Left ventricle myocardium inferior (tissue), 1 donor: ENCODE measurements at regions of chr1 and their contacts with region 1.

Region 1: GRCh38 chr1:239426821-239427475 is 40.6 kb downstream of the CHRM3 start:
- DNase-seq: no peak
- H3K4me3 ChIP-seq: no peak overlapping the region
- H3K27ac ChIP-seq: no peak overlapping the region
- H3K4me1 ChIP-seq: no peaks in the 10 kb centered on the region
- H3K27me3 ChIP-seq: peaks cover 6% of the 10 kb centered on the region
- CTCF ChIP-seq: no peak

Region 2: DNA sequence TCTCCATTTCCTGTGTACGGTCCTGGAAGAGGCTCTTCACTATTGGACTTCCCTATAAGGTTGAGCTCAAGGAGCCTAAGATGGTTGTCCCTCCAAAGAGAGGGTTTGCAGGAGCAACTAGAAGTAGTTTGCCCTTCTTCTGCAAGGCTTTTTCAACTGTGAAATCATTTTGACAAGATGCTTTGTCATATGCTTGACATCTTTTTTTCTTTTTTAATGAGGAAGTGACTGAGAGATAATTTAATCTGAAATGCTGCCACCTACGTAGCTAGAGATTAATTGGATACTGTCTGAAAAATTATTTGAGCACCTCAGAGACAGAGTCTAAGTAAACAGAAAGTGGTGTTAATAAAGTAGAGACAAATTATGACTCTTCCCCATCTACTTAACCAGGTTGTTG is 56.4 kb after region 1 on chr1:
- intact Hi-C with region 1: loop called (anchors 10 kb)
- DNase-seq: no peak
- H3K4me3 ChIP-seq: no peak overlapping the region
- H3K27ac ChIP-seq: no peak overlapping the region
- H3K4me1 ChIP-seq: no peaks in the 10 kb centered on the region
- H3K27me3 ChIP-seq: no peaks in the 10 kb centered on the region
- CTCF ChIP-seq: no peak

Region 3: DNA sequence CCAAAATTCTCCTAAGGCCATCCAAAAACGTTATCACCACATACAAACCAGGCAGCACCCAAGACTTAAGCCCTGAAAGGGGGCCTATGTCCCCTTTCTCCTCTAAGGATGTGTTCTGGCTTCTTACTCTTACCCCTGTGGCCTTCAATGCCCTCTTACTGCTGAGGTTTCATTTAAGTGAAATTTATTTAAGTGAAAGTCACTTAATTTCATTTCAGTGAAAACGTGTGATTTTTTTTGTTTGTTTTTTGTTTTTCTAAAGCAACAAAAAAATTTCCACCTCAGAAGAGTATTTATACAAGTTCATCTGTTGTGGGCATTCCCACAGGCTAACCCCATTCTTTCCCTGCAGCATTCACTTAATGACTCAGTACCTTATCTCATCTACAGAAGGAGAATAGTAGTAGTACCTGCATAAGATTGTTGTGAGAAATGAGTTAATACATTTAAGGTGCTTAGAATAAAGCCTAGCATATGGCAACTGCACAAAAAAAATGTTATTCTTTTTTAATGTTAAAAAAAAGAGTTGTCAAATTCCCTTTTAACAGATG is 180.0 kb after region 1 on chr1:
- intact Hi-C with region 1: no loop called
- DNase-seq: no peak
- H3K4me3 ChIP-seq: no peak overlapping the region
- H3K27ac ChIP-seq: no peak overlapping the region
- H3K4me1 ChIP-seq: no peaks in the 10 kb centered on the region
- H3K27me3 ChIP-seq: no peaks in the 10 kb centered on the region
- CTCF ChIP-seq: no peak